ENCODE measurements at regions of chr1 and their contacts with region 1.

Region 1: DNA sequence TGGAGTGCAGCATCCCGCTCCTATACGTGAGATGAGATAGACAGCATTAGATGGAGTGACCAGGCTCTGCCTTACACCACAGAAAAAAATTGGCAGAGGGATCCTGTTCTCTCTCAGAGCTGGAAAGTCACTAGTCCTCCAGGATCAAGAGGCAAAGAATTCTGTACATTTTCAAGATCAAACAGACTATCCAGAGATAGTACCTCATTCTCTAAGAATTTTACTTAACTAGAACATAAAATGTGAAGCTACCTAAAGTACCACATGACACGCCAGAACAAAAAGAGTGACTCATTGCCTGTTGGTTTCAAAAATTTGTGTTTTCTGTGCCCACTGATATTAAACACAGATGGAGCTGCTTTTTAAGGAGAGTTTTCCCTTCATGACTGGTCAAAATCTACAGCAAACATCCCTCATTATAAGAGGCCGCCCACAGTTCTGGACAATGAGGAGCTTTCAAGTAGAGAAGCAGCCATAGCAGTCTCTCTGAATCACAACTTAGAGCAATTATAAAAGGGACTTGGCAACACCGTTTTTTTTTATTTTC is 32.3 kb downstream of the CD160 start:
- DNase-seq: no peak
- H3K4me3 ChIP-seq: no peak overlapping the region
- H3K27ac ChIP-seq: no peak overlapping the region
- H3K4me1 ChIP-seq: no peaks in the 10 kb centered on the region
- H3K27me3 ChIP-seq: no peaks in the 10 kb centered on the region
- CTCF ChIP-seq: no peak
- POLR2A ChIP-seq: no peak

Region 2: DNA sequence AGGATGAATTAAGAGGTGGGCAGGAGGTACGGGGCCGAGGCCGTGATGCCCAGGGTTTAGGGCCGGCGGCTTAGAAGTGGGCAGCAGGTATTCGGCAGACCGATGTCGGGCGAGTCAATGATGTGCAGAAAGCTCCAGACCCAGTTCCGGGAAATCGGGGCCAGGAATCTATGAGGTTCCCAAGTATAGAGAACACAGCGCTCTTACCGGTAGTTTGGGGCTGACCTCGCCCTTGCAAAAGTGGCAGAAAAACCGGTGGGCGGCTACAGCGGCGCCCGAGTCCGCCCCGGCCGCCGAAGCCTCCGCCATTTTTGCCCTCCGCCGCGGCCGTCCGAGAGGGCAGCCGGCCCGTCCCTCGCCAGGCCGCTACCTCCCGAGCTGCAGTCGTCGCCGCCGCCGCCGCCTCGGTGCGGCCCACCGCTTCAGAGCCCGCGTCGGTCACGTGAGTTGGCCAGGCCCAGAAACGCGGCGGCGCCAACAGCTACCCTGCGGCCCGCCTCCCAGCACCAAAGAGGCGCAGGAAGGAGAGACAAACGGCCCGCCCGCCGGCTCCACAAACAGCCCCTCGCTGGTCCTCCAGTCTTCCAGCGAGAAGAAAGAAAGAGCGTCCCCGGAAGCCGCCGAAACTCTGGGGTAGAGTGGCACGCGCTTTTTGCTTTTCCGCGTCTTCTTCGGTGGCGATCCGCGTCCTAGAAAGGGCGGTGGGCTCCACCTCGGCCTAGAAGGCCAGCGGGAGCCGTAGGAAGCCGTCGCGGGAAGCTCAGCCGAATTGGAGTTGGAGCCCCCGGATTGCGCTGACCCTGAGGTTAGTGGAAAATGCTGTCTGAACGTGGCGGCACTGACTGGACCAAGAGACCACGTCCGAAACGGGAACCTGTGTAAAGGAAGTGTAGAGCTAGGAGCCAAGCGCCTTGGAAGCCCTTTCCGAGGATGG is 72.3 kb after region 1 on chr1 and contains the starts of genes POLR3C and RNF115:
- intact Hi-C with region 1: loop called (anchors 10 kb)
- DNase-seq: peak; percentile 88
- H3K4me3 ChIP-seq: peak within 1 kb of the TSS; percentile 72 to 85
- H3K27ac ChIP-seq: peak within 1 kb of the TSS; percentile 92 to 94
- H3K4me1 ChIP-seq: peaks cover 3% of the 10 kb centered on the region
- H3K27me3 ChIP-seq: no peaks in the 10 kb centered on the region
- CTCF ChIP-seq: peak in 2 of 4 experiments; percentile 10 to 20
- POLR2A ChIP-seq: peak; percentile 77
- total RNA-seq, gene POLR3C: 22.5 to 48.0 TPM
- total RNA-seq, gene RNF115: 12.5 to 21.4 TPM

Region 3: DNA sequence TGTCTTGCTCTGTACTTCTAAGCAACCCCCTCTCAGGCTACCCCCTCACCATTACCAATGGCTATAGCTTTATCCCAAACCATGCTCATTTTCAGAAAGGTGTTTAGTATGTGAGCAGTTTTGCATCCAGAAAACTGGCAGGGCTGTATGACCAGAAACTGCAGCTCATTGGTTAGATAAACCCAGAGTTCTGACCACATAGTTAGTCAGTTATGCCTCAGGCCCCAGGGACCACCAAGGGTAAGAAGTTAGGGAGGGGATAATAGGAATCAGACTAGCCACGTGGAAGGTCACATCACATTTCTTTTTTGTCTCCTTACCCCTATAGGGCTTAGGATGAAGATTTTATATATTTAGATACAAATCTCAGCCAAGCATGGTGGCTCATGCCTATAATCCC is 157.1 kb after region 1 on chr1:
- intact Hi-C with region 1: no loop called
- DNase-seq: no peak
- H3K4me3 ChIP-seq: no peak overlapping the region
- H3K27ac ChIP-seq: no peak overlapping the region
- H3K4me1 ChIP-seq: no peaks in the 10 kb centered on the region
- H3K27me3 ChIP-seq: no peaks in the 10 kb centered on the region
- CTCF ChIP-seq: no peak
- POLR2A ChIP-seq: no peak